Caco-2 (cell line): ENCODE measurements at regions of chr2 and their contacts with region 1.

Region 1: DNA sequence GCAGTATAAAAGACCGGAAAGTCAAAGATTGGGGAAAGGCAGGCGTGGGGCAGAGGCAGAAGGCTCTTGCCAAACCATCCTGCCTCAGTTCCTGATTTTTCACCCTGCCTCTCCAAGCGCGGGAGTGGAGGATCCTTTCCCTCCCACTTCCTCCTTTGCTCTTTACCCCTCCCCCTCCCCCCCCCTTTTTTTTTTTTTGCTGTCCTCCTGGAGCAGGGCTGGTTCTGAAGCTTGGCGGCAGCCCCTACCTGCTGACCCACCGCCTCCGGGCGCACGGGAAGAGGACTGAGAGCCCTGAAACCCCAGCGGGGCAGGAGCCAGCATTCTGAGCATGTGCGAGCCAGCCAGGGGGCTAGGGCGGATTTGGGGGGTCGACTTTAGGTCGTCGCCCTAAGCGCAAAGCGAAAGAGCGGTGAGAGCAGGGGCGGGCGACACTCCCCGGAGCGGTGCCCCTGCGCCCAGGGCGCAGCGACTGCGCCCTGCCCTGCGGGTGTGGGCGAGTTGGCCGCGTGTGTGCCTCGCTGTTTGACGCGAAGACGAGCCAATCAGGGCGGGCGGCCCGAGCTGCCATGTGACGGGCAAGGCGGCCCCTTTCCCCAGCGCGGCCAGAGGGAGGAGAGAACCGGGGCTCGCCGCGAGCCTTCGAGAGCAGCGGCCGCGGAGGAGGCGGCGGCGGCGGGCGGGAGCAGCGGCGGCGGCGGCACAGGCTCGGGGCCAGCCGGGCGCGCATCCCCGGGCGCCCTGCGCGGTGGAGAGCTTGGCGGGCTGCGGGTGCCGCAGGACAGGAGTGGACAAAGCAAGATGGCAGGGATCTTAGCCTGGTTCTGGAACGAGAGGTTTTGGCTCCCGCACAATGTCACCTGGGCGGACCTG is at the start of gene CERS6:
- DNase-seq: peak; percentile 96
- H3K4me3 ChIP-seq: peak within 1 kb of the TSS; percentile 90
- H3K4me3 Mint-ChIP-seq: no peak within 1 kb of the TSS
- H3K27ac Mint-ChIP-seq: no peak within 1 kb of the TSS
- H3K4me1 ChIP-seq: no peaks in the 10 kb centered on the region
- H3K4me1 Mint-ChIP-seq: peaks cover 11% of the 10 kb centered on the region
- H3K27me3 ChIP-seq: no peaks in the 10 kb centered on the region
- H3K27me3 Mint-ChIP-seq: no peaks in the 10 kb centered on the region
- CTCF ChIP-seq: no peak
- total RNA-seq, gene CERS6: 32.7 and 35.5 TPM in 2 replicates

Region 2: DNA sequence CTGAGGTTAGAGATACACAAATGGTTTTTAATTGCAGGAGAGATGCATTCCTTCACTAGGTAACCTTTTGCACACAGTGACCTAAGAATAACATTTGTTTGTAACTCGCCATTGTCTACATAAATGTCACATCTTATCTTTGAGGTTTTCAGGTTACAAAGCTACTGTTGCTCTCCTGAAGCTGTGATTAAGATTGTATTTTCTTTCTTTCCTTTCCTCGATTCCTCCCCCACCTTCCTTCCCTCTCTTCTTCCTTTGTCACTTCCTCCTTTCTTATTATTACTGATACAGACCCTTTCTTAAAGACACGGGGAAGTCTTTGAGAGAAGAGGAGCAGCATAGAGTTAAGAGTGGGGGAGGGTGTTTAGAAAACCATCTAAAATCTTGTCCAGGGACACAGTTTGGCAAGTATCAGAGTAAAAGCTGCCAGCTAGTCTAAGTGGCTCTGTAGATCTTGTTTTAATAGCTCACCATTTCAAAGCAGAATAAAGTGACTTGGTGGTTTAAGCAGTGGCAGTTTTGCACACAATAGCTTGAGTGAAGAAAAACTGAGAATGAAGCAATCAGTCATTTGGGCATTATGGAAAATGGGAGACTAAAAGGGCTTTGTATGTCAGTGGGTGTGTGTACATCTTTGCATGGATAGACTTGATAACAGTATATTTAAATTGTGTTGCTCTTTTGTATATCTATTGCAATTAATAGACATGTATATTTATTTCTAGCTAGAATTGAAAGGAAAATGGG is 11.1 kb after region 1 on chr2:
- CTCF ChIA-PET with region 1: no interaction called
- POLR2A ChIA-PET with region 1: interaction called, 4 read pairs
- intact Hi-C with region 1: loop called (anchors 1 kb)
- DNase-seq: no peak
- H3K4me3 ChIP-seq: no peak overlapping the region
- H3K4me3 Mint-ChIP-seq: peak overlapping the region; percentile 54
- H3K27ac Mint-ChIP-seq: peak overlapping the region; percentile 65
- H3K4me1 ChIP-seq: peaks cover 52% of the 10 kb centered on the region
- H3K4me1 Mint-ChIP-seq: peaks cover 72% of the 10 kb centered on the region
- H3K27me3 ChIP-seq: no peaks in the 10 kb centered on the region
- H3K27me3 Mint-ChIP-seq: no peaks in the 10 kb centered on the region
- CTCF ChIP-seq: no peak

Region 3: GRCh38 chr2:168490015-168490874 is 34.4 kb after region 1 on chr2:
- CTCF ChIA-PET with region 1: interaction called, 3 read pairs
- POLR2A ChIA-PET with region 1: no interaction called
- intact Hi-C with region 1: loop called (anchors 2 kb)
- DNase-seq: no peak
- H3K4me3 ChIP-seq: no peak overlapping the region
- H3K4me3 Mint-ChIP-seq: peak overlapping the region; percentile 12
- H3K27ac Mint-ChIP-seq: peak overlapping the region; percentile 56
- H3K4me1 ChIP-seq: peaks cover 52% of the 10 kb centered on the region
- H3K4me1 Mint-ChIP-seq: peaks cover 59% of the 10 kb centered on the region
- H3K27me3 ChIP-seq: no peaks in the 10 kb centered on the region
- H3K27me3 Mint-ChIP-seq: no peaks in the 10 kb centered on the region
- CTCF ChIP-seq: no peak

Region 4: GRCh38 chr2:168622559-168622958 is 166.7 kb after region 1 on chr2:
- CTCF ChIA-PET with region 1: no interaction called
- POLR2A ChIA-PET with region 1: no interaction called
- intact Hi-C with region 1: loop called (anchors 1 kb)
- DNase-seq: peak in 1 of 2 experiments; percentile 42
- H3K4me3 ChIP-seq: no peak overlapping the region
- H3K4me3 Mint-ChIP-seq: peak overlapping the region; percentile 30
- H3K27ac Mint-ChIP-seq: peak overlapping the region; percentile 72
- H3K4me1 ChIP-seq: peaks cover 26% of the 10 kb centered on the region
- H3K4me1 Mint-ChIP-seq: peaks cover 34% of the 10 kb centered on the region
- H3K27me3 ChIP-seq: no peaks in the 10 kb centered on the region
- H3K27me3 Mint-ChIP-seq: no peaks in the 10 kb centered on the region
- CTCF ChIP-seq: no peak